ENCODE measurements at regions of chr17 and their contacts with region 1.

Region 1: GRCh38 chr17:47733047-47733673 is at the start of gene TBX21:
- DNase-seq: peak; percentile 91
- ATAC-seq: peak; percentile 85
- H3K4me3 Mint-ChIP-seq: peak within 1 kb of the TSS; percentile 100
- H3K27ac Mint-ChIP-seq: peak within 1 kb of the TSS; percentile 98
- H3K4me1 Mint-ChIP-seq: peaks cover 63% of the 10 kb centered on the region
- H3K27me3 Mint-ChIP-seq: no peaks in the 10 kb centered on the region
- total RNA-seq, gene TBX21: 20.7 to 22.8 TPM

Region 2: GRCh38 chr17:47649153-47649971 is 83.8 kb before region 1 on chr17 and contains the start of gene KPNB1:
- POLR2A ChIA-PET with region 1: interaction called, 14 read pairs
- DNase-seq: peak; percentile 95
- ATAC-seq: peak; percentile 86
- H3K4me3 Mint-ChIP-seq: peak within 1 kb of the TSS; percentile 92
- H3K27ac Mint-ChIP-seq: peak within 1 kb of the TSS; percentile 96
- H3K4me1 Mint-ChIP-seq: peaks cover 37% of the 10 kb centered on the region
- H3K27me3 Mint-ChIP-seq: no peaks in the 10 kb centered on the region
- total RNA-seq, gene KPNB1: 335 TPM

Region 3: DNA sequence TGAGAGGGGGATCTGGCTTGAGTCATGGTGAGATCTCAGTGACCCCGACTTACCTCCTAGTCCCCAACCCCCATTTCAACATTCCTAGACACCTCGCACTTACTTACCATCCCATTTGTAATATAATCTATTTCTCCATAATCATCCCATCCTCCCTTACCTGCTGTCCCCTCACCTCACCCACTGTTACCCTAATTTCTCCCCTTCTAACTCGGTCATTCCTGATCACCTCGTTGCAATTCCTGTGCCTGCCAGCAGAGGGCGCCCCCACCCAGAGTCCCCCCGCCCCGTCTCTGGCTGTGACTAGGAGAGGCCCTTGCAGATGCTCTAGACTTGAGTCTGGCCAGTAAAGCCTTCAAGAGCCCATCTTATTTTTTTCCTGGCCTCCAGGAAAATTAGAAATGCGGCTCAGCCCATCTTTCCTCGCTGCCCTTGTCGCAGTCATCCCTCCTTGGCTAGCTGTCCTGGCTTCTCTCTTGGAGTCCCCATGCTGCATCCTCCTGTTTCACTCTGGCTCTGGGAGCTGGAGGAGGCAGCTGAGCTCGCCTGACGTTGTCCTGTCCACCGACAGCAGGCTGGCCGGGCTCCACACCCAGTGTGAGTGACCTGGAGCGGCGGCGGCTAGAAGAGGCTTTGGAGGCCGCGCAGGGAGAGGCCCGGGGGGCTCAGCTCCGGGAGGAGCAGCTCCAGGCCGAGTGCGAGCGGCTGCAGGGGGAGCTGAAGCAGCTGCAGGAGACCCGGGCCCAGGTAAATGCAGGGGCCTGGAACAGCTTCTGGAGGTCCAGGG is 34.2 kb before region 1 on chr17:
- POLR2A ChIA-PET with region 1: interaction called, 30 read pairs
- DNase-seq: peak; percentile 85
- ATAC-seq: peak; percentile 32
- H3K4me3 Mint-ChIP-seq: no peak overlapping the region
- H3K27ac Mint-ChIP-seq: peak overlapping the region; percentile 46
- H3K4me1 Mint-ChIP-seq: peaks cover 38% of the 10 kb centered on the region
- H3K27me3 Mint-ChIP-seq: peaks cover 3% of the 10 kb centered on the region

Region 4: GRCh38 chr17:47708863-47709541 is 24.2 kb before region 1 on chr17:
- POLR2A ChIA-PET with region 1: interaction called, 19 read pairs
- DNase-seq: no peak
- ATAC-seq: no peak
- H3K4me3 Mint-ChIP-seq: no peak overlapping the region
- H3K27ac Mint-ChIP-seq: no peak overlapping the region
- H3K4me1 Mint-ChIP-seq: peaks cover 49% of the 10 kb centered on the region
- H3K27me3 Mint-ChIP-seq: no peaks in the 10 kb centered on the region

Region 5: DNA sequence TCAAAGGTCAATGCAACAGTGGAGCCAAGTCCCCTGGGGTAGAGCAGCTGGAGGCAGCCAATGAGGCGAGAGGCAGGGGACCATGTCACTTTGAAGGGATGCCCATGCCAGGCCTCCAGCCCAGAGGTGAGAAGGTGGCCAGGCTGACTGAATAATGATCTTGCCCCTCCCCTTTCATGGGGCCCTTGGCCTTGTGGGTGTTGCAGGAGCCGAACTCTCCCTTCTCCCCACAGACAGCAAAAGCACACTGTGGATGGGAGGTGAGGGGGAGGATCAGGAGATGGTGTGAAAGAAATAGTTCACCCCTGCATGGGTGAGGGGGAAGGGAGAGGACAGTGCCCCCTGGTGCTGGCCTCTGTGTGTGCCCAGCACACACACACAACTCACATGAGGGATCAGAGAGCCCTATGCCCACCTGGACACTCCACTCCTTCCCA is 15.9 kb before region 1 on chr17:
- POLR2A ChIA-PET with region 1: interaction called, 37 read pairs
- DNase-seq: peak; percentile 52
- ATAC-seq: peak; percentile 3
- H3K4me3 Mint-ChIP-seq: no peak overlapping the region
- H3K27ac Mint-ChIP-seq: peak overlapping the region; percentile 73
- H3K4me1 Mint-ChIP-seq: peaks cover 76% of the 10 kb centered on the region
- H3K27me3 Mint-ChIP-seq: no peaks in the 10 kb centered on the region

Region 6: GRCh38 chr17:47789611-47790561 is 56.7 kb after region 1 on chr17:
- POLR2A ChIA-PET with region 1: no interaction called
- DNase-seq: peak; percentile 74
- ATAC-seq: peak; percentile 96
- H3K4me3 Mint-ChIP-seq: peak overlapping the region; percentile 78
- H3K27ac Mint-ChIP-seq: no peak overlapping the region
- H3K4me1 Mint-ChIP-seq: peaks cover 4% of the 10 kb centered on the region
- H3K27me3 Mint-ChIP-seq: peaks cover 77% of the 10 kb centered on the region